B cell (primary cell): ENCODE measurements at regions of chr10 and their contacts with region 1.

Region 1: GRCh38 chr10:101238732-101239105 is 9.5 kb upstream of the LBX1 start:
- DNase-seq: peak; percentile 46
- ATAC-seq: no peak
- H3K4me3 ChIP-seq: no peak overlapping the region
- H3K4me3 Mint-ChIP-seq: no peak overlapping the region
- H3K27ac ChIP-seq: no peak overlapping the region
- H3K27ac Mint-ChIP-seq: no peak overlapping the region
- H3K4me1 ChIP-seq: peaks cover 21 to 32% of the 10 kb centered on the region in 2 donors
- H3K4me1 Mint-ChIP-seq: peaks cover 12% of the 10 kb centered on the region
- H3K27me3 ChIP-seq: peaks cover 0 to 72% (median 62%) of the 10 kb centered on the region in 4 experiments
- H3K27me3 Mint-ChIP-seq: peaks cover 77% of the 10 kb centered on the region
- CTCF ChIP-seq: peak; percentile 58

Region 2: GRCh38 chr10:101222683-101223273 is 15.9 kb before region 1 on chr10:
- CTCF ChIA-PET with region 1: interaction called, 3 read pairs
- POLR2A ChIA-PET with region 1: no interaction called
- intact Hi-C with region 1: loop called (anchors 2 kb)
- DNase-seq: peak; percentile 70
- ATAC-seq: peak; percentile 26
- H3K4me3 ChIP-seq: peak overlapping the region in 4 of 5 experiments; percentile 30 to 63 (median 52)
- H3K4me3 Mint-ChIP-seq: peak overlapping the region; percentile 80
- H3K27ac ChIP-seq: no peak overlapping the region
- H3K27ac Mint-ChIP-seq: no peak overlapping the region
- H3K4me1 ChIP-seq: peaks cover 51 to 69% of the 10 kb centered on the region in 2 donors
- H3K4me1 Mint-ChIP-seq: peaks cover 51% of the 10 kb centered on the region
- H3K27me3 ChIP-seq: peaks cover 0 to 93% (median 80%) of the 10 kb centered on the region in 4 experiments
- H3K27me3 Mint-ChIP-seq: peaks cover 74% of the 10 kb centered on the region
- CTCF ChIP-seq: no peak